Esophagus squamous epithelium (tissue), 5 donors: ENCODE measurements at regions of chr10 and their contacts with region 1.

Region 1: GRCh38 chr10:51063659-51064535 is 10.4 kb upstream of the PRKG1 start:
- DNase-seq: no peak
- H3K4me3 ChIP-seq: no peak overlapping the region
- H3K27ac ChIP-seq: no peak overlapping the region
- H3K4me1 ChIP-seq: no peaks in the 10 kb centered on the region
- H3K27me3 ChIP-seq: no peaks in the 10 kb centered on the region
- CTCF ChIP-seq: peak in 5 of 6 experiments; percentile 36 to 74 (median 54)
- POLR2A ChIP-seq: no peak

Region 2: GRCh38 chr10:51010977-51011376 is 52.9 kb before region 1 on chr10:
- intact Hi-C with region 1: no loop called
- DNase-seq: no peak
- H3K4me3 ChIP-seq: no peak overlapping the region
- H3K27ac ChIP-seq: no peak overlapping the region
- H3K4me1 ChIP-seq: peaks cover 0 to 7% (median 3%) of the 10 kb centered on the region in 3 donors
- H3K27me3 ChIP-seq: peaks cover 0 to 3% (median 0%) of the 10 kb centered on the region in 4 donors
- CTCF ChIP-seq: peak; percentile 43 to 70 (median 60)
- POLR2A ChIP-seq: no peak

Region 3: DNA sequence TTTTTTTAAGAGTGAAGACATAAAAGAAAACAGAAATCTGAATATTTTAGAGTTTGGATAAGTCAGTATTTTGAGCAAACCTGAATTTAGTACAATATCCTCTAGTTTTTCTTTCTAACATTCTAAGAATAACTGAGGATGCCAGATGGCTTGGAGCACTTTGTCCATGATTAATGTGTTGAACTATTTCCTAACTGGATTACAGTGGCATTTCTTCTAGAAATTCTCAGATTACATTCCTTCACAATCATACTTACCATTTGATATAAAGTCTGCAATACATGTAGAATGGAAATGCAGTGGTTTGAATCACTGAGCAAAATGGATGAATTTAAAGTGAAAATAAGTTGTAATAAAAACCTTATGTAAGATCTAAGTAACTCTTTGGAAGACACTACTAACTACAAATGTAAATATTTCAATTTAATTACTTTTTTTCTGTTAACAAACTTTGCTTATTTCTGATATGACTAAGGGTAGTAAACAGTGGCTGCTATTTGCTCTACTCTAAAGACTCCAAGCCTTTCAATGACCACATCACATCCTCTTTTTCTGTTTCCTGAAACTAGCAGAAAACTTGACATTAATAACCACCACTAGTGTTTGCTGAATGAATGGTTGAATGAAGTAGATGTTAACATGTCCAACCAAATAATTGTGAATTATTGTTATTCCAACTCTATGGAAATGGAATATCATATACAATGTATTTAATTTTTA is 113.2 kb after region 1 on chr10:
- intact Hi-C with region 1: no loop called
- DNase-seq: no peak
- H3K4me3 ChIP-seq: no peak overlapping the region
- H3K27ac ChIP-seq: no peak overlapping the region
- H3K4me1 ChIP-seq: no peaks in the 10 kb centered on the region
- H3K27me3 ChIP-seq: no peaks in the 10 kb centered on the region
- CTCF ChIP-seq: no peak
- POLR2A ChIP-seq: no peak

Region 4: DNA sequence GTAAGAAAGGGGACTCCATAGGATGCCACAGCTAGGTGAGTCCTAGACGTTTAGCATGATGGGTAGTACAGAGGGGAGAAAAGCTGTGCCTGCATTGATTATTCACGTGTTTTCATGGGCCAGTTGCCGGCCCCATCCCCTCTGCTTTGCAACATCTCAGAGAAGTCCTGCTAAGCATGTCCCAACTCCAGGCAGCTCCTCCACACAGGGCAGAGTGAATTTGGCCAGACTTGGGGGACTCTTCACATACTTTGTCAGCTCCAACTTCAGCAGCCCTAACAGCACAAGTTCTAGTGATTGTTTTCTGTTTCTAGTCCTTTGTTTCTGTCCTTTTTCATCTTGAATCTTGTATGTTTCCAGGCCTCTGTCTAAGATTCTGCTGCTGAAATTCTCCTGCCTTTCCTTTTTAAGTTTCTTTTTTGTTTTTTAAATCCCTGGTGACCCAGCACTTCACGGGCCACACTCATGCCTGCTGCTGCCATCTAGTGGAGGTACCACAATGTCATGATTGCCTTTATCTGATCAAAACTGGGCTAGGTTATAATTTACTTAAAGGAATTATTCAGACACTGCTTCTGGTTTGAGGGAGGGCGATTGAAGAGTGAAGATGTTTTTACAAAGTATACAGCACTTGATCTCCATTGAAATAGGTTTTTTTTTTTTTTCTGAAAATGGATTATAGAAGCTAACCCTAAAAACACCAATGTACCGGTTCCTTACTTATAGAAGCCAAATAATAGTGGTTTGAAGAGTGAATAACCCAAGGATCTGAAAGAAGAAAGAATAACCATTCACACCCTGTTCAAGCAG is 358.6 kb after region 1 on chr10:
- intact Hi-C with region 1: loop called (anchors 10 kb)
- DNase-seq: no peak
- H3K4me3 ChIP-seq: no peak overlapping the region
- H3K27ac ChIP-seq: peak overlapping the region in 2 of 4 donors; percentile 15 to 37
- H3K4me1 ChIP-seq: peaks cover 0 to 8% (median 0%) of the 10 kb centered on the region in 3 donors
- H3K27me3 ChIP-seq: no peaks in the 10 kb centered on the region
- CTCF ChIP-seq: peak in 5 of 6 experiments; percentile 53 to 74 (median 67)
- POLR2A ChIP-seq: no peak